Heart left ventricle (tissue), 16 donors: ENCODE measurements at regions of chr18 and their contacts with region 1.

Region 1: GRCh38 chr18:37065254-37065653 is 236.3 kb downstream of the KIAA1328 start:
- DNase-seq: no peak
- ATAC-seq: no peak
- H3K4me3 ChIP-seq: no peak overlapping the region
- H3K27ac ChIP-seq: no peak overlapping the region
- H3K4me1 ChIP-seq: no peaks in the 10 kb centered on the region
- H3K27me3 ChIP-seq: no peaks in the 10 kb centered on the region
- CTCF ChIP-seq: no peak
- POLR2A ChIP-seq: no peak

Region 2: DNA sequence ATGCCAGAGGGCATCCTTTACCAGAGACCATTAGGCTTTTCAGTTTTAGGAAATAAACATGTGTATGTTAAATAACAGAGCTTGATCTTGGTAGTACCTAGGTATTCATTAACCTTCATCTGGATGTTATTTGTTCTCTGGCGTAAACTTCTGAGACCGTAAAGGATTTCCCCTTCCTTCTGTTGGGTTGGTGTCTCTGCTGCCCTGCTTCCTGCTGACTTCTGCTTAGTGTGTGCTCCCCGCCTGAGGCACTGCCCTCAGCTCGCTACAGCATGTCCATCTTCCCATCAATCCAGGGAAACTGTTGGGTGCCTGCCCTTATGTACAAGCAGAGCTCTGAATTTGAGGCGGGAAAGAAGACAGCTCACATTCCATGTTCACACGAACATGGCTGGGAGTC is 414.3 kb before region 1 on chr18:
- intact Hi-C with region 1: no loop called
- DNase-seq: no peak
- ATAC-seq: no peak
- H3K4me3 ChIP-seq: no peak overlapping the region
- H3K27ac ChIP-seq: no peak overlapping the region
- H3K4me1 ChIP-seq: peaks cover 0 to 15% (median 0%) of the 10 kb centered on the region in 12 donors
- H3K27me3 ChIP-seq: no peaks in the 10 kb centered on the region
- CTCF ChIP-seq: no peak
- POLR2A ChIP-seq: no peak

Region 3: DNA sequence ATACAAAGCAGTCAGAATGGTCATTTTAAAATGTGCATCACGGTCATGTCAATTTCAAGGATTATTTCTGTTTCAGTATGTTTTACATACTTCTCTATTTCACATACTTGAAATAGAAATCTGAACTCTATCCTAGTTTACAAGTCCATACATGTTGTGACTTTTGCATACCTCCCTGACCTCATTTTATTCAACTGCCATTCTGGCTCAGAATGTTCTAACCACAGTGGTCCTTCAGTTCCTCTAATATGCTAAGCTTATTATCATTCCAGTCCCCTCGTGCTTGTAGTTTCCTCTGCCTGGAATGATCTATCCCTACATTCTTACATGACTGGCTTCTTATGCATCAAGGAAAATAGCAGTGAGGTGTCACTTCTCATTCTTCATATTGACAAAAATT is 59.3 kb after region 1 on chr18:
- intact Hi-C with region 1: loop called in 1 of 10 experiments (anchors 10 kb)
- DNase-seq: no peak
- ATAC-seq: no peak
- H3K4me3 ChIP-seq: no peak overlapping the region
- H3K27ac ChIP-seq: no peak overlapping the region
- H3K4me1 ChIP-seq: no peaks in the 10 kb centered on the region
- H3K27me3 ChIP-seq: no peaks in the 10 kb centered on the region
- CTCF ChIP-seq: no peak
- POLR2A ChIP-seq: no peak

Region 4: DNA sequence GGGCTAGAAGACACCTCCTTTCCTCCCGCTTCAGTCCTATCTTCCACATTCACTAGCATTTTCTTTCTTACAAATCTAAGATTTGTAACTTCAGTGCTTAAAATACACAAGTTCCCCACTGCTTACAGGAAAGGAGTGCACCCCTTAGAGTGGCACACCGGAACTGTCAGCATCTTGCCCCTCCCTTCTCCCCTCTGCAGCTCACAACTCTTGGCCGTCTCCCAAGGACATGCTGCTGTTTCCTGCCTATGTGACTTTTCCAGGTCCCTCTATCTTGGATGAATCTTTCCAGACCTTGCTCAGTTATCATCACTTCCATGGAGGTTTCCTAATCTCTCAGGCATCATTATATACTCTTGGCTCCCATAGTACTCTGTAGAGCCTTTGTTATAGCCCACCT is 165.5 kb after region 1 on chr18:
- intact Hi-C with region 1: no loop called
- DNase-seq: no peak
- ATAC-seq: peak in 2 of 4 donors; percentile 20 to 39
- H3K4me3 ChIP-seq: no peak overlapping the region
- H3K27ac ChIP-seq: no peak overlapping the region
- H3K4me1 ChIP-seq: peaks cover 0 to 2% (median 0%) of the 10 kb centered on the region in 12 donors
- H3K27me3 ChIP-seq: no peaks in the 10 kb centered on the region
- CTCF ChIP-seq: no peak
- POLR2A ChIP-seq: no peak